Dorsolateral prefrontal cortex (tissue), 120 donors: ENCODE measurements at regions of chr12 and their contacts with region 1.

Region 1: DNA sequence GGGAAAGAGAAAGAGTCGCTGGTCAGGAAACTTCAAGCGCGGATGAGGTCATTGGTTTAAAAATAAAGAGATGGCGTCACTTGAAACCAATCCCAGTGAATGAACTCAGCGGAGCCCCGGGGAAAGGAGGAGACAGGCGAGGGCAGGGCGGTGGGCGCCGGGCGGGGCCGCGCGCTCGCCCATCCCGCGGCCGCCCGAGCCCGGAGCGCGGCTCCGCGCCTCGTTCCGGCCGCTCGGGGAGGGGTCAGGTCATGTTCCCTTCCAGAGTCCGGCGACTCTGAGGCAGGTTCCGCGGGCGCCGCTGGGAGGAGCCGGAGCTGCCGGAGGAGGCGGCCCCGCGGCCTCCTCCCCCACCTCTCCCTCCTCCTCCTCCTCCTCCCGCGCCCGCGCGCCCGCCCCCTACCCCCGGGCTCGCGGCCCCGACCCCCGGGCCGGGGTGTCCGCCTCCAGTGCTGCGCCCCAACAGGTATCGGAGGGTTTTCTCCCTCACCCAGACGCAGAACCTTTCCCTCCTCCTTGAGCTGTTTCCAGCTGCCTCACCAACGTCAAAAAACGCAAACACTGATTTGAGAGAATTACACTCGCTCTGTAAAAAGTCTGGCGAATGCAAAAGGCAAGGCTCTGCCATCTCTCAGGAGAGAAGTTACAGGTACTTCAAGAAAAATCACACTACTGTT is at the start of gene DUSP16:
- DNase-seq: peak; percentile 73 to 93 (median 88)
- H3K4me3 ChIP-seq: peak within 1 kb of the TSS; percentile 59 to 94 (median 80)
- H3K27ac ChIP-seq: peak within 1 kb of the TSS; percentile 93 to 100 (median 99)
- H3K27me3 ChIP-seq: no peaks in the 10 kb centered on the region
- CTCF ChIP-seq: peak in 37 of 56 donors; percentile 3 to 63 (median 36)
- total RNA-seq, gene DUSP16: 12.2 to 57.9 (median 21.4) TPM

Region 2: GRCh38 chr12:12266873-12267741 is 295.6 kb before region 1 on chr12 and contains the start of gene LRP6:
- intact Hi-C with region 1: loop called in 1 of 2 experiments (anchors 5 kb)
- DNase-seq: peak; percentile 73 to 93 (median 86)
- H3K4me3 ChIP-seq: peak within 1 kb of the TSS; percentile 56 to 98 (median 84)
- H3K27ac ChIP-seq: peak within 1 kb of the TSS; percentile 75 to 99 (median 96)
- H3K27me3 ChIP-seq: no peaks in the 10 kb centered on the region
- CTCF ChIP-seq: peak in 44 of 56 donors; percentile 5 to 66 (median 28)
- total RNA-seq, gene LRP6: 25.9 to 64.7 (median 42.9) TPM

Region 3: GRCh38 chr12:12327802-12328201 is 234.9 kb before region 1 on chr12:
- intact Hi-C with region 1: no loop called
- DNase-seq: no peak
- H3K4me3 ChIP-seq: peak overlapping the region in 1 of 59 donors; percentile 25
- H3K27ac ChIP-seq: peak overlapping the region in 13 of 59 donors; percentile 9 to 38 (median 21)
- H3K27me3 ChIP-seq: no peaks in the 10 kb centered on the region
- CTCF ChIP-seq: peak; percentile 43 to 91 (median 75)

Region 4: GRCh38 chr12:12398026-12398859 is 164.5 kb before region 1 on chr12:
- intact Hi-C with region 1: loop called in 1 of 2 experiments (anchors 2 kb)
- DNase-seq: peak in 1 of 10 donors; percentile 61
- H3K4me3 ChIP-seq: peak overlapping the region in 1 of 59 donors; percentile 15
- H3K27ac ChIP-seq: peak overlapping the region in 58 of 59 donors; percentile 27 to 92 (median 79)
- H3K27me3 ChIP-seq: no peaks in the 10 kb centered on the region
- CTCF ChIP-seq: peak in 26 of 56 donors; percentile 7 to 39 (median 22)

Region 5: DNA sequence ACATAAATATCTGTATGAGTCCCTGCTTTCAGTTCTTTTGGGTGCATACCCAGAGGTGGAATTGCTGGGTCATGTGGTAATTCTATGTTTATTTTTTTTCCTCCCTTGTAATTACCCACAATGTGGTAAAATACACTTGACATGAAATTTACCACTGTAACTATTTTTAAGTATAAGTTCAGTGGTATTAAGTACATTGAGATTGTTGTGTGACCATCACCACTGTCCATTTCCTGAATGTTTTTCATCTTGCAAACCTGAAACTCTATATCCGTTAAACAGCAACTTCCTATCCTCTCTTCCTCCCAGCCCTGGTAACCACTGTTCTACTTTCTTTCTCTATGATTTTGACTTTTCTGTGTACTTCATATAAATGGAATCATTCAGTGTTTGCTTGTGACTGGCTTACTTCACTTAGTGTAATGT is 154.4 kb before region 1 on chr12:
- intact Hi-C with region 1: no loop called
- DNase-seq: no peak
- H3K4me3 ChIP-seq: no peak overlapping the region
- H3K27ac ChIP-seq: peak overlapping the region in 11 of 59 donors; percentile 0 to 85 (median 24)
- H3K27me3 ChIP-seq: no peaks in the 10 kb centered on the region
- CTCF ChIP-seq: no peak

Region 6: DNA sequence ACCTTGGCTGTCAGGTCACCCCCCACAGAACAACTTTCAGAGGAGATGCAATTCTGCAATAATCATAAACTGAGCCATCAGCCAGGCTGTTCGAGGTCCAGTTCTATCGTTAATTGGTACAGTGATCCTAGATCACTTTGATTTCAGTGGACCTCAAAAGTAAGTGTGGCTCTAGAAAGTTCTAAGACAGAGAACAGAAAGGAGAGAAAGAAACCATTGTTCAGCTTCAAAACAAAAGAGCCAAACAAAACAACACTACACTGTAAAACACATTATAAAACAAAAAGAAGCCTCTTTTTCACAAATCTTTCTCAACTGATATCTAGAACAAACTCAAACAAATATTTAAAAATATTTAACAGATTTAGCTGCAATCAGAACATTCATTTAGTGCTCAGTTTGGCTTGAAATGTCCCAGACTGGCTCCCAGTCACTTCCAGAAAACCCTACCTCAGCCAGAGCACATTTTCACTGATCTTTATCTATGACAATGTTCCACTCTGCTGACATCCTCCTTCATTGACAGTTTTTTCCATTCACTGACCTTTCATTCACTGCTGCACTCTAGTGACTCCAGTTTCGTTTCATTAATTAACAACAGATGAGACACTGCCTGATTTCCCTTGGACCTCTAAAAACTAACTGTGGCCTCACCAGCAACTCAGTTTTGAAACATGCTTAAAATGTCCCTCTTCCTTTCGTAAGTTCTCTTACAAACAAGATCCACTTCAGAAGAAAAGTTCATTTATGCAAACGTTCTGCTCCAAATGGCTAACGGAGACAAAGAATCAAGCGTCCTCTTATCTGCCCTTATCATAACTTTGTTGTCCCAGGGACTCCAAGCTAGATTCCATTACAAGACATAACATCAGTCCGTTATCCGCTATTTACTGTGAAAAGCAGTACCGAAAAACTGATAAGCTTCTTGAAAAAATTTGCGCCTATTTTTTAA is 56.9 kb before region 1 on chr12:
- intact Hi-C with region 1: loop called in 1 of 2 experiments (anchors 5 kb)
- DNase-seq: no peak
- H3K4me3 ChIP-seq: peak overlapping the region in 44 of 59 donors; percentile 0 to 55 (median 34)
- H3K27ac ChIP-seq: peak overlapping the region; percentile 17 to 98 (median 86)
- H3K27me3 ChIP-seq: no peaks in the 10 kb centered on the region
- CTCF ChIP-seq: peak in 2 of 56 donors; percentile 13 to 17

Region 7: GRCh38 chr12:12540261-12541013 is 22.3 kb before region 1 on chr12:
- intact Hi-C with region 1: loop called in 1 of 2 experiments (anchors 2 kb)
- DNase-seq: no peak
- H3K4me3 ChIP-seq: no peak overlapping the region
- H3K27ac ChIP-seq: peak overlapping the region in 1 of 59 donors; percentile 9
- H3K27me3 ChIP-seq: no peaks in the 10 kb centered on the region
- CTCF ChIP-seq: no peak

Region 8: DNA sequence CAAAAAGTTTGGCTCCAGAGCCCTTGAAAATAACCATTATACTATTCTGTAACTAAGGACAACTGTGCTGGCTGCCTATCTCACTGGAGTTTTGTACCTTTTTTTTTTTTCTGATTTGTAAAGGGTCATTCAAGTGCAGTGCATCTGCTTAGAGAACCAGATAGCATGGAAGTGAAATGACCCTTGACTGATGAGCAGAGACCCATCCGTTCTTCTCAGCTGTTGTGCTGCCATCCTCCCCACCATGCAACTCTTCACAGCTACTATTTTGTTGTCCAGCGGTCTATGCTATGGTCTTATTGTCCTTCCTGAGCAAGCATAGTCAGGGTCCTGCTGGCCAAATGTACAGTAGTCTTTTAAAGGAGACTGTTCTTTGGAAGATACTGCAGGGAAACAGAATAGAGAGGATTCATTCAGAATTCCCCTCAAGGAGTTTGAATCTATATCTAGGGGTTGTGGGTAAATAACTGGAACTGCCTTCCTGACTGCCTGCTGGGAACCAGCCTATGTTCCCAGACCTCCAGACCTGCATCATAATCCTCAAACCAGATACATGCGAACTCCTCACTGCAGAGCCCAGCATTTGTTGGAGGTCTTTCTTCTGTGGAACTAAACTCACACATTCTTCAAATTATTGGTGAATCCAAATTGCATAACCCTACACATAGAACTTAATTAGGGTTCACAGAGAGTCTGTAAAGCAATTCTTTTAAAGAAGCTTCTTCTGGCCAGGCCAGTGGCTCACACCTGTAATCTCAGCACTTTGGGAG is 92.2 kb after region 1 on chr12:
- intact Hi-C with region 1: loop called (anchors 1 to 5 kb)
- DNase-seq: no peak
- H3K4me3 ChIP-seq: no peak overlapping the region
- H3K27ac ChIP-seq: peak overlapping the region in 54 of 59 donors; percentile 1 to 90 (median 72)
- H3K27me3 ChIP-seq: no peaks in the 10 kb centered on the region
- CTCF ChIP-seq: no peak

Region 9: DNA sequence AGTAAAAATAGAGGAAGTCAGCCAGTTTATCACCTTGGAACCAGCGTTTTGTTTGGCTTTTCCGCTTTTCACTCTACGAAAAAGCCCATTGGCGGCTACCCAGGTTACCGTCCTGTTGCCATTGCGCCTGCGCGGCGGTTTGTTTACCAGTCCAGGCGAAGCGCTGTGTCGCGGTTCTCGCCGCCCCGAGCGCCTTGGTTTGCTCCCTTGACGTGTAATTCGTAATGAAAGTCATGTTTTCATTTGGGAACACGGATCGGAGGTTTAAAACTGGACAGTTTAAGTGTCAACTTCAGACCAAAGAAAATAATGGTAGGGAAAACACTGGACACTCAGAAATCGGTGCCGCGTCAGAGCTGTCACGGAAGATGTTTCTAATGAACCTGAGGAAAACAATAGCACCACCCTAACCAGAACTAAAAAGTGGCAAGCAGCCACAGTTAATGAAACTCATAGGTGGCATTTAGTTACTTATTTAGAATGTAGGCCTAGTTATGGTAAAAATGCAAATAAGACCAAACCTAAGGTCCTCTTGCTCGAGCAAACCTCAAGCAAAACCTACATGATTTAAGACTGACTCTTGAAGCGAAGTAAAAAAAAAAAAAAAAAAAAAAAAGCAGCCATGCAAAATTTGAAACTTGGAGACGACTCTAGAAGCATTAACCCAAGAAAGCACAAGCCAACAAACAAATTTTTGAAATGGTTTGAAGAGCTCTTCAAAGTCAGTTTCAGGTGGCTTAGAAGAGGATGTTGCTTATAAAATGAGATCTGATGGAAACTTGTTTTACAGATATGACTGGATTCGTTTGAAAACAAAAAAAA is 134.1 kb after region 1 on chr12:
- intact Hi-C with region 1: loop called (anchors 5 kb)
- DNase-seq: peak; percentile 84 to 91 (median 90)
- H3K4me3 ChIP-seq: peak overlapping the region; percentile 36 to 87 (median 68)
- H3K27ac ChIP-seq: peak overlapping the region; percentile 89 to 100 (median 99)
- H3K27me3 ChIP-seq: no peaks in the 10 kb centered on the region
- CTCF ChIP-seq: peak in 17 of 56 donors; percentile 2 to 44 (median 9)